Activated CD4-positive, alpha-beta memory T cell treated with anti-CD3 and anti-CD28 coated beads, Interleukin-2, amount 10 ng/mL, durations not matched to agents 7 days and 5 days (primary cell): ENCODE measurements at regions of chr6 and their contacts with region 1.

Region 1: GRCh38 chr6:34223956-34224940 is 12.4 kb upstream of the HMGA1 start:
- DNase-seq: peak; percentile 94
- H3K4me3 Mint-ChIP-seq: peak overlapping the region; percentile 64
- H3K27ac Mint-ChIP-seq: peak overlapping the region; percentile 59
- H3K4me1 Mint-ChIP-seq: peaks cover 32% of the 10 kb centered on the region
- H3K27me3 Mint-ChIP-seq: peaks cover 3% of the 10 kb centered on the region

Region 2: GRCh38 chr6:34182751-34183531 is 41.3 kb before region 1 on chr6:
- CTCF ChIA-PET with region 1: interaction called, 3 read pairs
- POLR2A ChIA-PET with region 1: interaction called, 10 read pairs
- DNase-seq: peak; percentile 76
- H3K4me3 Mint-ChIP-seq: peak overlapping the region; percentile 36
- H3K27ac Mint-ChIP-seq: peak overlapping the region; percentile 60
- H3K4me1 Mint-ChIP-seq: peaks cover 17% of the 10 kb centered on the region
- H3K27me3 Mint-ChIP-seq: no peaks in the 10 kb centered on the region

Region 3: DNA sequence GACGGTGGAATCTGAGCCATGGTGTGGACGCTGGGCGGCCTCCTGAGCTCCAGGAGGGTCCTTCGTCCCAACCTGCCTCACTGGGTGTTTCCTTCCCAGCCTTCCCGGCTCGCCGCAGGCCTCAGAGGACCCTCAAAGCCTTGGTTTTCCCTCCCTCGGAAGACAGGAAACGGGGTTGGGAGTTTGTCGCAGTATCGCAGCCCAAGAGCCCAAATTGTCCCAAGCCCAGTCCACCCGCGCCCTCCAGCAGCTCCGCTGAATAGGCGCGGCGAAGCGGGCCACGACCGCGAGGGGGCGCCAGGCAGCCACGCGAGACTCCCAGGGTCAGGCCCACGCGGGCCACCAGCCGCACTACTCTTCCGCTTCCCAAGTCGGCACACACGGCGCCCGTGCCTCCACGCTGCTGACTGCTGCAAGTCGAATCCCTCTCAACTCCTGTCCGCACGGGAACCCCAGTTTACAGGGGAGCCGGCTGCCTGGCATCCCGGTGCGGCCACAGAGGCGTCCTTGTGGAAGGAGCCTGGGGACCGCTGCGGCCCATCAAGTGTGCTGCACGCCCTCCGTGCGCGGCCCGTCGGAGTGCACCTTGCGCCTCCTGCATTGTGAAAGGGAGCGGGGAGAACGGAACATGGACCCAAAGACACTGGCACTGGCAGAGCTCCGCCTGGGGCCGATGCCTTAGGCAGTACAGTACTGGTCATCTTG is 28.0 kb before region 1 on chr6:
- CTCF ChIA-PET with region 1: interaction called, 15 read pairs
- POLR2A ChIA-PET with region 1: no interaction called
- DNase-seq: peak; percentile 87
- H3K4me3 Mint-ChIP-seq: peak overlapping the region; percentile 73
- H3K27ac Mint-ChIP-seq: no peak overlapping the region
- H3K4me1 Mint-ChIP-seq: peaks cover 3% of the 10 kb centered on the region
- H3K27me3 Mint-ChIP-seq: peaks cover 11% of the 10 kb centered on the region

Region 4: DNA sequence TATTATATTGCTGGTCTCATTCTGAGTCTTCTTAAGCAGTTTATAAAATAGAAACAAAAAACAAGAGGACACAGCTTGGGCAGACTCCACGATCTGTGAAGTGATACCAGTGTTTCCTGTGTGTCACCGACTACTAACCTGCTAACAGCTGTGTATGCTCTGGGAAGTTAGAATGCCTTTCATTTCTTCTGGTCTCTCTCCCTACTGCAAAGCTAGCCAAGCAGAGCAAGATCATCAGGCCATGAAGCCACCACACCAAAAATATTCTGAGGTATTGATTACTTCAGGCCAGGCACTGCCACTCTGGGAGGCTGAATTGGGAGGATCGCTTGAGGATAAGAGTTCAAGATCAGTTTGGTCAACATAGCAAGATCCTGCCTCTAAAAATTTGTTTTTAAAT is 71.5 kb after region 1 on chr6:
- CTCF ChIA-PET with region 1: no interaction called
- POLR2A ChIA-PET with region 1: no interaction called
- DNase-seq: peak; percentile 24
- H3K4me3 Mint-ChIP-seq: no peak overlapping the region
- H3K27ac Mint-ChIP-seq: peak overlapping the region; percentile 74
- H3K4me1 Mint-ChIP-seq: peaks cover 14% of the 10 kb centered on the region
- H3K27me3 Mint-ChIP-seq: no peaks in the 10 kb centered on the region